ENCODE measurements at regions of chr7 and their contacts with region 1.

Region 1: DNA sequence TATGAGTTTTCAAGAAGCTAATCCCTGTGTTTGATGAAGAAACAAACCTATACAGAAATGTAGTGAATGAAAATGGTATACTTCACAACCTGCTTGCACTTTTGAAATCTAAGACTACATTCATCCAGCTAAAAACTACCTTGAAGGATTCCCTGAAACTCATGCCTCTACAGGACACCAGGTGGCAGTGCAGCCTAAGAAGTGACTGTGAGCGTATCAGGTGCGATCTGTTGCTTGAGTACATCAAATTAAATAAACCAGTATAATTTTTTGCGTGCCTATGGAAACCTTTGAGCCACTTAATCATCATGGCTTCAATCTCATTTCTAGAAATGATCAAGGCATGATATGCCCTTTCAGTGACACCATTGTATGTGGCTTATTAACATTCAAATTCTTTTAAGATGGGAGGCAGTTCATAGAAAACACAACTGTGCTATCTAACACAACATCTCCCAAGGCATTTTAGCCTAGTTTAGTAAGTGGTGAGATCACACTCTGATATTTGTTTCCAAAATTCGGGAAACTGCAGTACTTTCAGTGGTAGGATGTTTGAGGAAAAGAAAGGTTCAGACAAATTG is 57.4 kb downstream of the PPP1R17 start:
- DNase-seq: peak; percentile 72
- ATAC-seq: peak; percentile 65
- H3K4me3 Mint-ChIP-seq: no peak overlapping the region
- H3K27ac Mint-ChIP-seq: no peak overlapping the region
- H3K4me1 Mint-ChIP-seq: no peaks in the 10 kb centered on the region
- H3K27me3 Mint-ChIP-seq: peaks cover 9% of the 10 kb centered on the region

Region 2: GRCh38 chr7:32062150-32062549 is 317.8 kb after region 1 on chr7:
- CTCF ChIA-PET with region 1: no interaction called
- POLR2A ChIA-PET with region 1: no interaction called
- intact Hi-C with region 1: loop called in 1 of 2 experiments (anchors 1 kb)
- DNase-seq: peak; percentile 55
- ATAC-seq: no peak
- H3K4me3 Mint-ChIP-seq: no peak overlapping the region
- H3K27ac Mint-ChIP-seq: no peak overlapping the region
- H3K4me1 Mint-ChIP-seq: no peaks in the 10 kb centered on the region
- H3K27me3 Mint-ChIP-seq: no peaks in the 10 kb centered on the region

Region 3: DNA sequence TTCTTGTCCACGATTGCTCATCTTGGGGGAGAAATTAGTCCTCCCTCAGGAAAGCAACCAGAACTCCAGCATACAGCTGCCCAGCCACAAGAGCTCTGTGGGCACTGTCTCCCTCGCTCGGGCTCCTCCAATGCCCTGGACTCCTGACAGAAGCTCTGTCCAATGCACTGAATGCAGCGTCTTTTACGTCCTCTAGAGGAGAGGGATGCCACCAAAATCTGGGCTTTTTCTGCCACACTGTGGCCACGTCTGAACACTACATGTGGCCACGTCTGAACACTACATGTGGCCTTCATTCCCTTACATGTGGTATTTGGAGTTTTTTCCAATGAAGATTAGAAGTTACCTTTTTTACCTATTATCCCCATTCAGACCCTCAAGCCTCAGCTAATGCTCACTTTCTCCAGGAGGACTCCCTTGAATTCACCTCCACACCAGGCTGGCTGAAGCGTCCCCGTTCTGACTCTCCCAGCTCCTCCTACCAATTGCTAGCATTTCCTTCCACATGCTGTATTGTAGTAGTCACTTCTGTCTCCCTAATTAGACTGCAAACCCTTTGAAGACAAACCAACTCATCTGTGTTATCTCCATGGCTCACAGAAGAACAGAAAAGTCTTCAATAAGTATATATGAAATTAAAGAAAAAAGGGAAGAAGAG is 460.1 kb after region 1 on chr7:
- CTCF ChIA-PET with region 1: interaction called, 3 read pairs
- POLR2A ChIA-PET with region 1: no interaction called
- intact Hi-C with region 1: loop called (anchors 1 kb)
- DNase-seq: peak; percentile 34
- ATAC-seq: no peak
- H3K4me3 Mint-ChIP-seq: no peak overlapping the region
- H3K27ac Mint-ChIP-seq: no peak overlapping the region
- H3K4me1 Mint-ChIP-seq: no peaks in the 10 kb centered on the region
- H3K27me3 Mint-ChIP-seq: peaks cover 3% of the 10 kb centered on the region

Region 4: GRCh38 chr7:32347244-32347828 is 603.0 kb after region 1 on chr7:
- CTCF ChIA-PET with region 1: interaction called, 3 read pairs
- POLR2A ChIA-PET with region 1: no interaction called
- intact Hi-C with region 1: loop called (anchors 2 to 5 kb)
- DNase-seq: peak; percentile 64
- ATAC-seq: no peak
- H3K4me3 Mint-ChIP-seq: no peak overlapping the region
- H3K27ac Mint-ChIP-seq: no peak overlapping the region
- H3K4me1 Mint-ChIP-seq: no peaks in the 10 kb centered on the region
- H3K27me3 Mint-ChIP-seq: no peaks in the 10 kb centered on the region

Region 5: DNA sequence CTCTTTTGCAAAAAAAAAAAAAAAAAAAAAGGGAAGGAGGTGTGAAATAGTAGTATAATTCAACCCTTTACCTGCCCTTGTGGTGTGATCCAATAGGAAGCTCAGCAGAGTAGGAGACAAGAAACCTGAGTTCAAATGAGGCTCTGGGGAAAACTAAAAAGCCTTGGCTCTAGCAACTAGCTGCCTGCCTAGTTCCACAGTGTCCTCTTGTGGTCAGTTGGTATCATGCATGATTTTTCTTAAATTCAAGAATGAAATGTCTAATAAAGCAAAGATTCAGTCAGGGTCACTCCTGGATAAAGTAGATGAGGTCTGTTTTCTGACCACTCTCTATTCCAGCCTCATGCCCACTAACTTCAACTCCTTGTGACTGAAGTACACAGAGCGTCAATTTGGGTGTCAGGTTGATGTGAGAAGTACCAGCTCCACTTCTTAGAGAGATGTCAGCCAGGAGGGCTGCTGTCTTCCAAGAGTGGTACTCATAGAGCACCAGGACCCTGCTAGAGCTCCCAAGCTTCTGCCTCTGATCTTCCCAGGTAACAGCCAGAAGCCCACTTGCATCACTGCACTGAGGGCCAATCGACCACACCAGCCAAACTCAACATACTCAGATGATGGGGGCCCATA is 735.3 kb after region 1 on chr7:
- CTCF ChIA-PET with region 1: interaction called, 5 read pairs
- POLR2A ChIA-PET with region 1: no interaction called
- intact Hi-C with region 1: loop called in 1 of 2 experiments (anchors 1 kb)
- DNase-seq: peak; percentile 27
- ATAC-seq: no peak
- H3K4me3 Mint-ChIP-seq: no peak overlapping the region
- H3K27ac Mint-ChIP-seq: no peak overlapping the region
- H3K4me1 Mint-ChIP-seq: peaks cover 6% of the 10 kb centered on the region
- H3K27me3 Mint-ChIP-seq: no peaks in the 10 kb centered on the region

Measured in activated CD4-positive, alpha-beta T cell treated with anti-CD3 and anti-CD28 coated beads for 36 hours (primary cell).